ENCODE measurements at regions of chr1 and their contacts with region 1.

Region 1: DNA sequence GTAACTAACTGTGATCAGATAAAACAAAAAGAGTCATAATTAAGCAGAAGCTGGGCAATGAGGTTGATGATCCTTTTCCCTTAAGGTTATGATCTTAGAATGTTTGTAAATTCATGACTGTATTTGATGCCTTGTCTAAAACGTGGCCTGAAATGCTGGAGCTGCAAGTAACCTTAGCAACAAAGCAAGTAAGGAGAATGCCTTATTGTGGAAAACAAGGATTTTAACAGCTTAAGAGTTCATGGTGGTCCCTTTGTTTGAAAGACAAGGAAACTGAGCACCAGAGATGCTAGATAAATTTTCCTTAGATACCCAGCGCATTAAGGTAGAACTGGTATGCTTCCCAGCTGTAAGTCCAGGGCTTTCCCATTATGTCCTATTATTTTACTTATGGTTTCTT is 25.7 kb upstream of the XPR1 start:
- DNase-seq: no peak
- ATAC-seq: no peak
- H3K4me3 ChIP-seq: no peak overlapping the region
- H3K27ac ChIP-seq: no peak overlapping the region
- H3K4me1 ChIP-seq: peaks cover 4% of the 10 kb centered on the region
- H3K27me3 ChIP-seq: no peaks in the 10 kb centered on the region
- CTCF ChIP-seq: no peak
- POLR2A ChIP-seq: no peak
- RAD21 ChIP-seq: no peak

Region 2: DNA sequence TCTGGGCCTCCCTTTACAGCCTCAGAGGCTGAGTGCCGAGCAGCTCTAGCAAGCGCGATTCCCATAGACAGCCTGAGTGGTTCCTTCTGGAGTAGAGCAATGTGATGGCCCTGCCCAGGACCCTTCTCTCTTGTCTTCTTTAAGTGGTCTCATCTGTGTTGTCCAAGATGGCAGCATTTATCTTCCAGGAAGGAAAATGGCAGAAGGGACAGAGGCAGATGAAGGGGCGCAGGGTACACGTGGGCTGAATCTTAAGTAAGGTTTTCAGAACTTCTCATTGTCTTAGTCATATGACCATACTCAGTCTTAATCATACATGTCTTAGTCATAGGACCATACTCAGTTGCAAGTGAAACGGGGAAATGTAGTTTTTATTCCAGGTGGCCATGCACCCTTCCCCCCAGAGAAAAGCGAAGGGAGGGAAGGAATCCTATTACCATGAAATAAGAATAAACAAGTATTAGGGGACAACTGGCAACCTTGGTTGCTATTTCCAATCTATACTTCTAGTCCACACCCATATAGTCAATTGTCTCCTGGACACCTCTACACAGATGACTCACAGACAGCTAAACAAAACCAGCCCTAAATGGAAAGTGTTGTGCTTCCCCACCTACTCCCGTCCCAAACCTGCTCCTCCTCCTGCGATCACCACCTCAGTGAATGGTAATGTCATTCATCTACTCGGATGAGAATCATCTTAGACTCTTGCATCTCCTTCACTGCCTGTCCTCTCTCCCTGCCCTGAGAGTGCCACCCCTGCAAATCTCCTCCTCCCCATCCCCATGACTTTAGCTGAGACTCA is 34.1 kb before region 1 on chr1:
- CTCF ChIA-PET with region 1: no interaction called
- POLR2A ChIA-PET with region 1: no interaction called
- dilution Hi-C with region 1: no loop called
- in situ Hi-C with region 1: no loop called
- intact Hi-C with region 1: loop called (anchors 1 kb)
- DNase-seq: peak; percentile 50
- ATAC-seq: no peak
- H3K4me3 ChIP-seq: no peak overlapping the region
- H3K27ac ChIP-seq: no peak overlapping the region
- H3K4me1 ChIP-seq: peaks cover 3% of the 10 kb centered on the region; the same call in 1 of the 2 replicates
- H3K27me3 ChIP-seq: no peaks in the 10 kb centered on the region
- CTCF ChIP-seq: no peak
- POLR2A ChIP-seq: no peak
- RAD21 ChIP-seq: no peak

Region 3: DNA sequence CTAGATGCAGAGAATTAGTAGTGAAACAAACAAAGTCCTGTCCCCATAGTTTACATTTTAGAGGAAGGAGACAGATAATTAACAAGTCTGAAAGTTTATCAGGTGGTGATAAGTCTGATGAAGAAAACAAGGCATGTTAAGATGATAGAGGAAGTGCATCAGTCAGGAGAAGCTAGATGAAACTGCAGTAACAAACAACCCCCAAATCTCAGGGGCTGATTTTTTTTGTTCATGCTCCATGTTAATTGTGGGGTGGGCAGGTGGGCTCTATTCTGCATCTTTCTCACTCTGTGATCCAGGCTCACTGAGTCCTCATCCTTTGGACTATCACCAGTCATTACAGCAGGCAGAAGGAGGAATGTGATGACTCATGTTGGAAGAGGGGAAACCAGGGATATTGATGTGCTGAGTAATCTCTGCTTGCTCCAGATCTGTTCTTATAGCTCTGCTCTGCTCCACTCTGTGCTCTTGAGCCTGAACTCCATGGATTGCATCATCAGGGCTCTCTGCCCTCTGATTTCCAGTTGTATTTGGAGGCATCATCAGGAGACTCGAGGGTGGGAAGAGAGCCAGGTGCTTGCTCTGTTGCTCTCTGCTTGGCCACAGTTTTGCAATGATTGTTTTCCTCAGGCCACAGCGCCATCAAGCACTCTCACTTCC is 649.2 kb after region 1 on chr1:
- CTCF ChIA-PET with region 1: no interaction called
- POLR2A ChIA-PET with region 1: no interaction called
- dilution Hi-C with region 1: no loop called
- in situ Hi-C with region 1: no loop called
- intact Hi-C with region 1: no loop called
- DNase-seq: peak; percentile 95
- ATAC-seq: peak; percentile 96
- H3K4me3 ChIP-seq: no peak overlapping the region
- H3K27ac ChIP-seq: no peak overlapping the region
- H3K4me1 ChIP-seq: no peaks in the 10 kb centered on the region
- H3K27me3 ChIP-seq: 0 out of 2 replicates have a peak, but pooled peaks cover 3% of the 10 kb centered on the region
- CTCF ChIP-seq: no peak
- POLR2A ChIP-seq: no peak
- RAD21 ChIP-seq: no peak

Measured in IMR-90 (cell line).